HepG2 (cell line): ENCODE measurements at regions of chr5 and their contacts with region 1.

Region 1: GRCh38 chr5:140575309-140575708 is 10.7 kb downstream of the SLC35A4 start:
- DNase-seq: peak; percentile 76
- ATAC-seq: peak; percentile 92
- H3K4me3 ChIP-seq: peak overlapping the region; percentile 17 to 57 (median 40); a peak in 4 of 6 replicates
- H3K27ac ChIP-seq: no peak overlapping the region
- H3K4me1 ChIP-seq: peaks cover 45% of the 10 kb centered on the region
- H3K27me3 ChIP-seq: no peaks in the 10 kb centered on the region
- CTCF ChIP-seq: peak; percentile 92
- EP300 ChIP-seq: no peak
- POLR2A ChIP-seq: no peak
- RAD21 ChIP-seq: peak; percentile 87

Region 2: GRCh38 chr5:140609126-140609525 is 33.8 kb after region 1 on chr5:
- CTCF ChIA-PET with region 1: interaction called, 3 read pairs
- POLR2A ChIA-PET with region 1: no interaction called
- in situ Hi-C with region 1: no loop called
- intact Hi-C with region 1: loop called (anchors 2 kb)
- DNase-seq: no peak
- ATAC-seq: no peak
- H3K4me3 ChIP-seq: no peak overlapping the region
- H3K27ac ChIP-seq: no peak overlapping the region
- H3K4me1 ChIP-seq: peaks cover 73% of the 10 kb centered on the region
- H3K27me3 ChIP-seq: no peaks in the 10 kb centered on the region
- CTCF ChIP-seq: no peak
- EP300 ChIP-seq: no peak
- POLR2A ChIP-seq: no peak
- RAD21 ChIP-seq: no peak

Region 3: GRCh38 chr5:140664359-140665119 is 89.2 kb after region 1 on chr5 and contains the start of gene WDR55:
- CTCF ChIA-PET with region 1: no interaction called
- POLR2A ChIA-PET with region 1: no interaction called
- in situ Hi-C with region 1: no loop called
- intact Hi-C with region 1: loop called (anchors 1 kb)
- DNase-seq: peak; percentile 90
- ATAC-seq: peak; percentile 99
- H3K4me3 ChIP-seq: peak within 1 kb of the TSS; percentile 75 to 100 (median 91)
- H3K27ac ChIP-seq: peak within 1 kb of the TSS; percentile 76
- H3K4me1 ChIP-seq: peaks cover 28% of the 10 kb centered on the region
- H3K27me3 ChIP-seq: no peaks in the 10 kb centered on the region; a peak in 1 of 5 replicates
- CTCF ChIP-seq: no peak; the same call in none of the 2 replicates
- EP300 ChIP-seq: peak in 1 of 2 experiments; percentile 19; a peak in 1 of 4 replicates
- POLR2A ChIP-seq: peak; percentile 81 to 97
- RAD21 ChIP-seq: peak; percentile 55
- total RNA-seq, gene WDR55: 18.2 and 18.5 TPM in 2 replicates